AG04450 (cell line): ENCODE measurements at regions of chr2 and their contacts with region 1.

Region 1: DNA sequence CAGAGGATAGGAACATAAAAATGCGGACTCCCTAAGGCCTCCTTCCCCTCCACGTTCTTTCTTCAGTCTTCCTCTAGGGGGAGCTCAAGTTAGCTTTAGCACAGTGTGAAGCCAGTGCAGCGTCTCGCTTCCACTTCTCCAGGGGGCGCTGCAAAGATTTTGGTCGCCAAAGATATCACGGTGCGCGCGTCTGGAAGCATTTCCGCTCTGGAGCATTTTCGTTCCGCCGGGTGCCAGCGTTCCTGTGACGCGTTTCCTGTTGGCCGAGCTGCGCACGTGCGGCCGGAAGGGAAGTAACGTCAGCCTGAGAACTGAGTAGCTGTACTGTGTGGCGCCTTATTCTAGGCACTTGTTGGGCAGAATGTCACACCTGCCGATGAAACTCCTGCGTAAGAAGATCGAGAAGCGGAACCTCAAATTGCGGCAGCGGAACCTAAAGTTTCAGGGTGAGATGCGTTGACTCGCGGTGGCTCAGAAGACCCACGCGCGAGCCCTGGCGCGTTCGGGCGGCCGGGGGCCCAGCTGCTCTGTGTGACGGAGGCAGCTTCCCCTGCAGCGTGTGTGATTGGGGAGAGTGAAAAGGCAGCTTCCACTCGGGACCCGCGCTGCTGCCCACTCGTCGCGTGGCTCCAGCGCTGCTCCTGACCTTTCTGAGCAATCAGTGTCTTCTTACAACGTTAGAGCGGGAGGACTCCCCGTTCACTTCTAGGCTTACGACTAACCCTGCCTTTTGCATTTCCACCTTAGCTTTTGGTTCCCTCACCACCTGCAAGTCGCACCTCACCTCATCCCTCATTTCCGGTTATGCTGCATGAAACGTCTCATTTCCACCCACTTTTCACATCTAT is at the start of gene DDX18:
- DNase-seq: peak; percentile 95
- H3K4me3 ChIP-seq: peak within 1 kb of the TSS; percentile 94
- H3K27ac ChIP-seq: peak within 1 kb of the TSS; percentile 79
- H3K27me3 ChIP-seq: no peaks in the 10 kb centered on the region
- CTCF ChIP-seq: peak; percentile 100
- polyA plus RNA-seq, gene DDX18: 42.1 and 53.5 TPM in 2 replicates

Region 2: GRCh38 chr2:117738991-117739839 is 75.4 kb before region 1 on chr2:
- CTCF ChIA-PET with region 1: no interaction called
- POLR2A ChIA-PET with region 1: no interaction called
- DNase-seq: no peak
- H3K4me3 ChIP-seq: no peak overlapping the region
- H3K27ac ChIP-seq: no peak overlapping the region
- H3K27me3 ChIP-seq: no peaks in the 10 kb centered on the region
- CTCF ChIP-seq: no peak

Region 3: GRCh38 chr2:117801826-117802225 is 12.8 kb before region 1 on chr2:
- CTCF ChIA-PET with region 1: interaction called, 34 read pairs
- POLR2A ChIA-PET with region 1: no interaction called
- DNase-seq: no peak
- H3K4me3 ChIP-seq: no peak overlapping the region
- H3K27ac ChIP-seq: no peak overlapping the region
- H3K27me3 ChIP-seq: no peaks in the 10 kb centered on the region
- CTCF ChIP-seq: no peak

Region 4: DNA sequence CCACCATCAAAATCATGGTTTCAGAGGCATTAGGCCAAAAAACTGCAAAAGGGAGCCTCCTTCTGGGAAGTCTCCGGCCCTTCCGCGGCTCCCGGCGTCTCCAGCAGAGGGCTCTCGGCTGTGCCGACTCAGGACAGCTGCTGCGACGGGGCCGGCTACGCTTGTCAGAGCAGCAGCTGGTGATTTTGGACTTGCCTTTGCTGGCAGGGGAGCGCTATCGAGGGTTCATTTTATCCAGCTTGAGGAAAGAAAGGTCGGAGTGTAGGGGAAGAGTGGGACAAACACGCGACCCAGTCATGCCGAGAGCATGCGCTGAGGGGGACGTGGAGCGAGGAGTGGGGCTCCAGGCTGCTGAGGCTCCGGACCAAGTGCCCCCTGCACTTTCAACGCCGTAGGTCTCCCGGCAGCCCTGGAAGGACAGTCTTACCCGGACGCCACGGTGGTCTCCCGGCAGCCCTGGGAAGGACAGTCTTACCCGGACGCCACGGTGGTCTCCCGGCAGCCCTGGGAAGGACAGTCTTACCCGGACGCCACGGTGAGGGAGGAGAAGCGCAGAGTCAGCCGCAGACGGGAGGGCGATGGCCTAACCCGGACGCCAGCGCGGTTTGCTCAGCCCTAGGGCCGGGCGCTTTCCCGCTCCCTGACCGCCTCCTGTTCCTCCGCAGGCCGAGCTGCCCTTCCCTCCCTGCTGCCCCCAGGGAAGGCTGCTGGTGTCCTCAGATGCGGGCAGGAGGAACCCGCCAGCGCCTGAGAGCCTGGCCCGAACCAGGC is 21.5 kb after region 1 on chr2:
- CTCF ChIA-PET with region 1: interaction called, 28 read pairs
- POLR2A ChIA-PET with region 1: no interaction called
- DNase-seq: peak; percentile 59
- H3K4me3 ChIP-seq: peak overlapping the region; percentile 57
- H3K27ac ChIP-seq: no peak overlapping the region
- H3K27me3 ChIP-seq: no peaks in the 10 kb centered on the region
- CTCF ChIP-seq: peak; percentile 97

Region 5: GRCh38 chr2:117917223-117917917 is 102.7 kb after region 1 on chr2:
- CTCF ChIA-PET with region 1: interaction called, 26 read pairs
- POLR2A ChIA-PET with region 1: no interaction called
- DNase-seq: no peak
- H3K4me3 ChIP-seq: no peak overlapping the region
- H3K27ac ChIP-seq: no peak overlapping the region
- H3K27me3 ChIP-seq: no peaks in the 10 kb centered on the region
- CTCF ChIP-seq: peak; percentile 51

Region 6: GRCh38 chr2:117958186-117958585 is 143.5 kb after region 1 on chr2:
- CTCF ChIA-PET with region 1: interaction called, 23 read pairs
- POLR2A ChIA-PET with region 1: no interaction called
- DNase-seq: no peak
- H3K4me3 ChIP-seq: no peak overlapping the region
- H3K27ac ChIP-seq: no peak overlapping the region
- H3K27me3 ChIP-seq: no peaks in the 10 kb centered on the region
- CTCF ChIP-seq: no peak

Region 7: DNA sequence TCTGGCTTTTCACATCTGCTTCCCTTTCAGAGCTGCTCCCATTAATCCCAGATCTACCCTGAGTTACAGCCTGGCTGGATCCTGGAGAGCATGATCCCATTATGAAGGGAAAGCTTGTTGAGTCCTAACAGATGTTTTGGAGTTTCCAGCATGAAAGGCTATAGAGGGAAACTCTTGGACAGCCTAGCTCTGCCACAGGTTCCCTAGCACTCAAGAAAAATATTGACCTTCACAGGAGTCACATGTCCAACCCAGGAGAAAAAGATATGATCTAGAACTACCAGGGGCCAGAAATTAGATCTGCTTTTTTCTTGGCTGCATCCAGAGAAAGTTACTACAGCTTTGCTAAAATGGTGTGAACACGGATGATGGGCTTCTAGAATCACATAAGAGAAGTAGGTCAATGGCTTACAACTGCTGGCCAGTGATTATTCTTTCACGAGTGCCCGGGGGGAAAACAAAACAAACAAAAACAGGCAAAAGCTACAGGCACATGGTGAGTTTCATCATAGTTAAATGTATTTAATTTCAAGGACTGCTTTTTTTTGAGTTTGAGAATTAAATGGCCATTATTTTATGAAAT is 183.3 kb after region 1 on chr2:
- CTCF ChIA-PET with region 1: interaction called, 267 read pairs
- POLR2A ChIA-PET with region 1: interaction called, 4 read pairs
- DNase-seq: no peak
- H3K4me3 ChIP-seq: no peak overlapping the region
- H3K27ac ChIP-seq: no peak overlapping the region
- H3K27me3 ChIP-seq: no peaks in the 10 kb centered on the region
- CTCF ChIP-seq: no peak